Aorta (tissue), 5 donors: ENCODE measurements at regions of chr11 and their contacts with region 1.

Region 1: GRCh38 chr11:8709002-8709672 is 26.5 kb downstream of the RPL27A start:
- DNase-seq: peak; percentile 96 to 98
- ATAC-seq: peak; percentile 91
- H3K4me3 ChIP-seq: no peak overlapping the region
- H3K27ac ChIP-seq: peak overlapping the region; percentile 76 to 95
- H3K4me1 ChIP-seq: no peaks in the 10 kb centered on the region
- H3K27me3 ChIP-seq: no peaks in the 10 kb centered on the region

Region 2: GRCh38 chr11:8688414-8689362 is 20.4 kb before region 1 on chr11:
- intact Hi-C with region 1: loop called in 1 of 2 experiments (anchors 2 kb)
- DNase-seq: peak; percentile 97 to 98
- ATAC-seq: peak; percentile 97
- H3K4me3 ChIP-seq: peak overlapping the region; percentile 32 to 65
- H3K27ac ChIP-seq: peak overlapping the region; percentile 18 to 92
- H3K4me1 ChIP-seq: no peaks in the 10 kb centered on the region
- H3K27me3 ChIP-seq: no peaks in the 10 kb centered on the region

Region 3: GRCh38 chr11:8807544-8808225 is 98.5 kb after region 1 on chr11:
- intact Hi-C with region 1: loop called in 1 of 2 experiments (anchors 5 kb)
- DNase-seq: no peak
- ATAC-seq: peak; percentile 65
- H3K4me3 ChIP-seq: peak overlapping the region in 1 of 2 donors; percentile 3
- H3K27ac ChIP-seq: peak overlapping the region; percentile 53 to 93
- H3K4me1 ChIP-seq: peaks cover 0 to 2% of the 10 kb centered on the region in 2 donors
- H3K27me3 ChIP-seq: no peaks in the 10 kb centered on the region